ENCODE measurements at regions of chr20 and their contacts with region 1.

Region 1: DNA sequence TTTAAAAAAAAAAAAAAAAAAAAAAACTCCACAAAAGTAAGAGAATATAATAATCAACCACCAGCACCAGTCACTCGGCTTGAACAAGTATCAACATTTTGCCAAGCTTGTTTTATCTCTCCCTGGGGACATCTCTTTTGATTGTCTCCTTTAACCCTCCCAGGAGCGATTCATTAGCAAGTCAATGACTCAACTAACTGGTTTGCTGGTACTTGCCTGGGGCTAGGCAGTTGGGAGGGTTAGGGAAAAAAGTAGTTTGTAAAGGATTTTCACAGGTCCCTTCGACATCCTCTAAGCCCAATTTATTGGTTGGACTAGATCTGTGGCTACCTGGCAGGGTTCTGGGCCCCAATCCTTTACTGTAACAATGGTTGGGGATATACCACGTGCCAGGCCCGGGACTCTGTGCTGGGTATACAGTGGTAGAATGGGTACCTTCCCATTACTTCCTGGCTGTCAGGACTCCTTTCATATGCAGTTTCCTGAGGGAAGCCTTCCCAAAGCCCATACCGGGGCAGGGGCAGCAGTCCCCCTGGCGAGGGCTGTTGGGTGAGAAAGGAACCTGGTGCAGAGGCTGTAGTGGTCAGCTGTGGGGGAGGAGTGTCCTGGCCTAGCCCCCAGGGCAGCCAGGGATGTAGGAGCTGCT is 12.2 kb downstream of the TGIF2 start:
- DNase-seq: no peak
- ATAC-seq: no peak
- H3K4me3 ChIP-seq: no peak overlapping the region
- H3K4me3 Mint-ChIP-seq: no peak overlapping the region
- H3K27ac ChIP-seq: no peak overlapping the region
- H3K27ac Mint-ChIP-seq: peak overlapping the region in 1 of 2 donors; percentile 77
- H3K4me1 ChIP-seq: peaks cover 3 to 21% of the 10 kb centered on the region in 2 experiments
- H3K4me1 Mint-ChIP-seq: peaks cover 23 to 27% (median 24%) of the 10 kb centered on the region in 3 donors
- H3K27me3 ChIP-seq: no peaks in the 10 kb centered on the region
- H3K27me3 Mint-ChIP-seq: no peaks in the 10 kb centered on the region

Region 2: GRCh38 chr20:34859376-34859775 is 1726.2 kb before region 1 on chr20:
- CTCF ChIA-PET with region 1: no interaction called
- POLR2A ChIA-PET with region 1: no interaction called
- DNase-seq: no peak
- ATAC-seq: no peak
- H3K4me3 ChIP-seq: no peak overlapping the region
- H3K4me3 Mint-ChIP-seq: no peak overlapping the region
- H3K27ac ChIP-seq: no peak overlapping the region
- H3K27ac Mint-ChIP-seq: no peak overlapping the region
- H3K4me1 ChIP-seq: no peaks in the 10 kb centered on the region
- H3K4me1 Mint-ChIP-seq: peaks cover 0 to 3% (median 0%) of the 10 kb centered on the region in 3 donors
- H3K27me3 ChIP-seq: no peaks in the 10 kb centered on the region
- H3K27me3 Mint-ChIP-seq: no peaks in the 10 kb centered on the region

Region 3: GRCh38 chr20:36562724-36563123 is 22.9 kb before region 1 on chr20:
- CTCF ChIA-PET with region 1: interaction called, 7 to 12 read pairs
- POLR2A ChIA-PET with region 1: interaction called in 1 of 2 experiments, 5 read pairs
- DNase-seq: no peak
- ATAC-seq: no peak
- H3K4me3 ChIP-seq: no peak overlapping the region
- H3K4me3 Mint-ChIP-seq: no peak overlapping the region
- H3K27ac ChIP-seq: no peak overlapping the region
- H3K27ac Mint-ChIP-seq: no peak overlapping the region
- H3K4me1 ChIP-seq: peaks cover 0 to 8% of the 10 kb centered on the region in 2 experiments
- H3K4me1 Mint-ChIP-seq: peaks cover 0 to 14% (median 7%) of the 10 kb centered on the region in 3 donors
- H3K27me3 ChIP-seq: no peaks in the 10 kb centered on the region
- H3K27me3 Mint-ChIP-seq: no peaks in the 10 kb centered on the region

Measured in T-cell (primary cell).